Naive thymus-derived CD4-positive, alpha-beta T cell (primary cell): ENCODE measurements at regions of chr4 and their contacts with region 1.

Region 1: GRCh38 chr4:15778289-15779241 is at the start of gene CD38:
- DNase-seq: peak; percentile 16 to 67 (median 37)
- ATAC-seq: peak; percentile 66
- H3K4me3 ChIP-seq: peak within 1 kb of the TSS; percentile 71
- H3K4me3 Mint-ChIP-seq: peak within 1 kb of the TSS; percentile 86 to 97 (median 94)
- H3K27ac ChIP-seq: peak within 1 kb of the TSS; percentile 65
- H3K27ac Mint-ChIP-seq: peak within 1 kb of the TSS; percentile 81 to 93 (median 87)
- H3K4me1 ChIP-seq: peaks cover 12 to 32% of the 10 kb centered on the region in 2 donors
- H3K4me1 Mint-ChIP-seq: peaks cover 37 to 82% (median 77%) of the 10 kb centered on the region in 7 donors
- H3K27me3 ChIP-seq: no peaks in the 10 kb centered on the region
- H3K27me3 Mint-ChIP-seq: no peaks in the 10 kb centered on the region
- total RNA-seq, gene CD38: 5.6 to 189 (median 14.3) TPM

Region 2: DNA sequence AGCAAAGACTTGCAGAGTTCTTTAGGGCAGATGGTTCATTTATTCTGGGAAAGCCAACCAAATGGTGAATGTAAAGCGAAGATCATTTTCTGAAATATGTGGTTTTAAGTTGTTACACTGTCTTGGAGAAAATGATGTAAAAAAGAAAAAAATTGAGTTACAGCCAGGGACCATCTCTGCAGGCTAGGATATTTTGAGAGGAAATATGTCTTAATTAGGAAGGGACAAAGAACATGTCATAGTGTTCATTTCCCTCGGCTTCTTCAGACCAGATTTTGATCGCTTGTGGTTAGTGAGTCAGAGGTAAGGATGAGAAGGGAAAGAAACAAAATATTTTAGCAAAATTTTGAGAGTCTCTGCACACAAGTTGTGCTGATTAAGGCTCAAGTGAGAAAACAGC is 409.7 kb before region 1 on chr4:
- CTCF ChIA-PET with region 1: no interaction called
- POLR2A ChIA-PET with region 1: no interaction called
- intact Hi-C with region 1: no loop called
- DNase-seq: no peak
- ATAC-seq: no peak
- H3K4me3 ChIP-seq: no peak overlapping the region
- H3K4me3 Mint-ChIP-seq: peak overlapping the region in 1 of 10 donors; percentile 4
- H3K27ac ChIP-seq: no peak overlapping the region
- H3K27ac Mint-ChIP-seq: no peak overlapping the region
- H3K4me1 ChIP-seq: no peaks in the 10 kb centered on the region
- H3K4me1 Mint-ChIP-seq: peaks cover 2 to 19% (median 7%) of the 10 kb centered on the region in 7 donors
- H3K27me3 ChIP-seq: no peaks in the 10 kb centered on the region
- H3K27me3 Mint-ChIP-seq: peaks cover 0 to 7% (median 0%) of the 10 kb centered on the region in 5 donors

Region 3: GRCh38 chr4:15655229-15656037 is 123.1 kb before region 1 on chr4 and contains the start of gene FBXL5:
- CTCF ChIA-PET with region 1: no interaction called
- POLR2A ChIA-PET with region 1: no interaction called
- intact Hi-C with region 1: loop called (anchors 2 kb)
- DNase-seq: peak; percentile 77 to 92 (median 87)
- ATAC-seq: peak; percentile 92
- H3K4me3 ChIP-seq: peak within 1 kb of the TSS; percentile 87
- H3K4me3 Mint-ChIP-seq: peak within 1 kb of the TSS; percentile 94 to 100 (median 97)
- H3K27ac ChIP-seq: peak within 1 kb of the TSS; percentile 90
- H3K27ac Mint-ChIP-seq: peak within 1 kb of the TSS; percentile 90 to 98 (median 98)
- H3K4me1 ChIP-seq: peaks cover 29% of the 10 kb centered on the region in 2 donors
- H3K4me1 Mint-ChIP-seq: peaks cover 21 to 49% (median 45%) of the 10 kb centered on the region in 7 donors
- H3K27me3 ChIP-seq: no peaks in the 10 kb centered on the region
- H3K27me3 Mint-ChIP-seq: peaks cover 0 to 2% (median 0%) of the 10 kb centered on the region in 5 donors
- total RNA-seq, gene FBXL5: 39.1 to 107 (median 57.4) TPM

Region 4: DNA sequence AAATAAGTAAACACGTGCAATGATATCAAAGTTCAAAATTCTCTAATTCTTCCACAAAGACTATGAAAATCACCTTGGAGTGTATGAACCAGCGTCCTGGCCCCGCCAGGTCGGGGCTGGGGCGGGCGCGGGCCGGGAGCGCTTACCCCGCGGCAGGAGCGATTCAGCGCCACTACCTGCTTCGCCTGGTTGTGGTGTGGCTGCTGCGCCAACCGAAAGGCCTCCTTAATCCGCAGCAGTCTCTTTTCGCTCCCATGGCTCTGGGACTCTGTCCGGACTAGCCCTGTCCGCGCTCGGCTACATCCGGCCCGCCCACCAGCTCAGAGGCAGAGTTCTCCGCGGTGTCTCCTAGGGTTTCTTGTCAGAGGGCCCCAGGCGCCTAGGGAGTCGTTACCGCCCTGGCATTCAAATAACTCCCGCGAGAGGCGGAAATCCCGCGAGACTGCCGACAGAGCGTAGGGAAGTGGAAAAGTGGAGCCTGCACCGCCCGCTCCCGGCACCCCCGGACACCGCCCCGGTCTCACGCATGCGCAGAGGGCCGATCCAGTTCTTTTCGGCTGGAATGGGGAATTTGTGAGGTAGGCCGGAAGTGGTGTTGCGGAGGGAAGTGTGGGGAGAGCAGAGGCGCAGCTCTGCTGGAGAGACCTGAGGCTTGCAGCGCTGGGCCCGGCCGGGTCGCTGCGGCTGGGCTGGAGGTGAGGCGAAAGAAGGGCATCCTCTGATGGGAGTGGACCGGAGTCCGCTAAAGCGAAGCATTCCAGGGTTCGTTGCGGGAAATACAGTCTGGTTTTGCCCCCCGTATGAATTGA is 97.2 kb before region 1 on chr4 and contains the start of gene FAM200B:
- CTCF ChIA-PET with region 1: no interaction called
- POLR2A ChIA-PET with region 1: no interaction called
- intact Hi-C with region 1: loop called in 1 of 2 experiments (anchors 2 kb)
- DNase-seq: peak; percentile 87 to 100 (median 93)
- ATAC-seq: peak; percentile 98
- H3K4me3 ChIP-seq: peak within 1 kb of the TSS; percentile 78
- H3K4me3 Mint-ChIP-seq: peak within 1 kb of the TSS; percentile 88 to 99 (median 94)
- H3K27ac ChIP-seq: peak within 1 kb of the TSS; percentile 94
- H3K27ac Mint-ChIP-seq: peak within 1 kb of the TSS; percentile 89 to 100 (median 98)
- H3K4me1 ChIP-seq: peaks cover 5 to 11% of the 10 kb centered on the region in 2 donors
- H3K4me1 Mint-ChIP-seq: peaks cover 22 to 54% (median 42%) of the 10 kb centered on the region in 7 donors
- H3K27me3 ChIP-seq: no peaks in the 10 kb centered on the region
- H3K27me3 Mint-ChIP-seq: no peaks in the 10 kb centered on the region
- total RNA-seq, gene FAM200B: 10.6 to 42.8 (median 27.4) TPM

Region 5: DNA sequence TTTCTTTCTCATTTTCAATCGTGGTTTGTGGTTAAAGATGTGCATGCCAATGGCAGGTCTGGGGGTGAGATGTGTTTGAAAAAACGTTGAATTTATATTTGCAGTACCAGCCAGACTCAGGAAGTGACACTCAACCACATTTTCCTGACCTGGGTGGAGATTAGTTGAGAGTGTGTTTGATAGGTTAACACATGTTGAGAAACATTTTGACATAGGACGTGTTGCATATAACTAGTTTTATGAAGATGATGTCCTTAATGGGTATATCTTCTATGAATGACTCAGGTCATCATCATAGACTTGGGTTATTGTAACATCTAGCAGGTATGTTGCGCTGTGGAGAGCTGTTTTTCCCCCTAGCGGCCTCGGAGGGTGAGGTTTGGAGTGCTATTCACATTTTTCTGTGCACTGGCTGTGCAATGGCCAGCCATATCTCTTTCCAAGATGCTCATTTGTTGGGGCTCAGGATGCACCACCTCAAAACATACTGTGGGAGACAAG is 22.2 kb before region 1 on chr4:
- CTCF ChIA-PET with region 1: interaction called, 5 read pairs
- POLR2A ChIA-PET with region 1: interaction called, 7 read pairs
- intact Hi-C with region 1: loop called (anchors 1 kb)
- DNase-seq: peak; percentile 33 to 83 (median 78)
- ATAC-seq: peak; percentile 89
- H3K4me3 ChIP-seq: peak overlapping the region; percentile 41
- H3K4me3 Mint-ChIP-seq: peak overlapping the region; percentile 64 to 92 (median 76)
- H3K27ac ChIP-seq: peak overlapping the region; percentile 39
- H3K27ac Mint-ChIP-seq: peak overlapping the region; percentile 81 to 98 (median 93)
- H3K4me1 ChIP-seq: peaks cover 35 to 36% of the 10 kb centered on the region in 2 donors
- H3K4me1 Mint-ChIP-seq: peaks cover 43 to 69% (median 62%) of the 10 kb centered on the region in 7 donors
- H3K27me3 ChIP-seq: no peaks in the 10 kb centered on the region
- H3K27me3 Mint-ChIP-seq: no peaks in the 10 kb centered on the region

Region 6: DNA sequence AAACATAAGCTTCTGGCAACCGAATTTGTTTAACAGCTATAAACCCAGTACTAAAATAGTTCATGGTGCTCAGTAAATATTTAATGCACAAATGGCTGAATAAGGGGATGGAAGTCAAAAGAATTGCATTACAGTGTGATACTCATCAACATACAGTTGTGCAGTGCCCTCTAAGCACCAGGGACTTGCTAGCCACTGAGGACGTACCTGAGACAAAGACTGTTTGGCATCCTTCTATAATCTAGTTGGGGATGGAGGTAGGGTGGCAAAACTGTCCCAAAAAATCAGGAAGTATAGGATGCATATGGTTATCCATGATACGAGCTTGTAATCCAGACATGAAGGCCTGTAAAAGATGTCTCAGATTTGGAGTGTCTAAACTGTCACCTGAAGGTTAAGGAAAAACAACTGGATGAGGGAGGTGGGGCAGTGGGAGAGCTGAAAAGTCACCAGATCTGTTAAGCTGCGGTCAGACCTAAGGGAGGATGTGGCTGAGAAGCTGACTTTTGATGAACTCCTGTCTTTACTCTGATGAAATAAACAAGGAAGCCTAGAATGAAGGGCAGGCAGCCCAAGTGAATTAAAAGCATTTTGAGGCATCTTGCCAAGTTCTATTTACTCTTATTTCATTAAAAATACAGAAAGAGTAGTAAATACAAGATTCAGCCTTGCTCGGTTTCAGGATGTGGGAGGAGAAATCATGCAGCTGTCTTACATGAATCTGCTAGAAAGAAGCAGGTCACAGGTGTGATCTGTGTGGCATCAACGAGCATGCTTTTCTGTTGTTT is 12.5 kb before region 1 on chr4:
- CTCF ChIA-PET with region 1: interaction called, 9 read pairs
- POLR2A ChIA-PET with region 1: interaction called, 18 read pairs
- intact Hi-C with region 1: loop called (anchors 1 kb)
- DNase-seq: peak in 7 of 9 donors; percentile 58 to 83 (median 79)
- ATAC-seq: peak; percentile 82
- H3K4me3 ChIP-seq: no peak overlapping the region
- H3K4me3 Mint-ChIP-seq: peak overlapping the region; percentile 50 to 83 (median 72)
- H3K27ac ChIP-seq: peak overlapping the region; percentile 32
- H3K27ac Mint-ChIP-seq: peak overlapping the region; percentile 37 to 92 (median 86)
- H3K4me1 ChIP-seq: peaks cover 27 to 43% of the 10 kb centered on the region in 2 donors
- H3K4me1 Mint-ChIP-seq: peaks cover 28 to 70% (median 59%) of the 10 kb centered on the region in 7 donors
- H3K27me3 ChIP-seq: no peaks in the 10 kb centered on the region
- H3K27me3 Mint-ChIP-seq: no peaks in the 10 kb centered on the region

Region 7: GRCh38 chr4:15794905-15795304 is 16.3 kb after region 1 on chr4:
- CTCF ChIA-PET with region 1: no interaction called
- POLR2A ChIA-PET with region 1: no interaction called
- intact Hi-C with region 1: loop called in 1 of 2 experiments (anchors 2 kb)
- DNase-seq: no peak
- ATAC-seq: no peak
- H3K4me3 ChIP-seq: no peak overlapping the region
- H3K4me3 Mint-ChIP-seq: peak overlapping the region in 1 of 10 donors; percentile 29
- H3K27ac ChIP-seq: no peak overlapping the region
- H3K27ac Mint-ChIP-seq: peak overlapping the region in 7 of 9 donors; percentile 5 to 62 (median 16)
- H3K4me1 ChIP-seq: peaks cover 0 to 3% of the 10 kb centered on the region in 2 donors
- H3K4me1 Mint-ChIP-seq: peaks cover 16 to 60% (median 50%) of the 10 kb centered on the region in 7 donors
- H3K27me3 ChIP-seq: no peaks in the 10 kb centered on the region
- H3K27me3 Mint-ChIP-seq: no peaks in the 10 kb centered on the region

Region 8: GRCh38 chr4:15805583-15806517 is 27.3 kb after region 1 on chr4:
- CTCF ChIA-PET with region 1: interaction called, 6 read pairs
- POLR2A ChIA-PET with region 1: interaction called, 3 read pairs
- intact Hi-C with region 1: loop called in 1 of 2 experiments (anchors 1 kb)
- DNase-seq: peak in 7 of 9 donors; percentile 37 to 64 (median 52)
- ATAC-seq: peak; percentile 80
- H3K4me3 ChIP-seq: no peak overlapping the region
- H3K4me3 Mint-ChIP-seq: no peak overlapping the region
- H3K27ac ChIP-seq: no peak overlapping the region
- H3K27ac Mint-ChIP-seq: peak overlapping the region in 3 of 9 donors; percentile 21 to 78 (median 60)
- H3K4me1 ChIP-seq: peaks cover 0 to 4% of the 10 kb centered on the region in 2 donors
- H3K4me1 Mint-ChIP-seq: peaks cover 26 to 76% (median 43%) of the 10 kb centered on the region in 7 donors
- H3K27me3 ChIP-seq: no peaks in the 10 kb centered on the region
- H3K27me3 Mint-ChIP-seq: no peaks in the 10 kb centered on the region